Naive thymus-derived CD4-positive, alpha-beta T cell (primary cell): ENCODE measurements at regions of chr16 and their contacts with region 1.

Region 1: DNA sequence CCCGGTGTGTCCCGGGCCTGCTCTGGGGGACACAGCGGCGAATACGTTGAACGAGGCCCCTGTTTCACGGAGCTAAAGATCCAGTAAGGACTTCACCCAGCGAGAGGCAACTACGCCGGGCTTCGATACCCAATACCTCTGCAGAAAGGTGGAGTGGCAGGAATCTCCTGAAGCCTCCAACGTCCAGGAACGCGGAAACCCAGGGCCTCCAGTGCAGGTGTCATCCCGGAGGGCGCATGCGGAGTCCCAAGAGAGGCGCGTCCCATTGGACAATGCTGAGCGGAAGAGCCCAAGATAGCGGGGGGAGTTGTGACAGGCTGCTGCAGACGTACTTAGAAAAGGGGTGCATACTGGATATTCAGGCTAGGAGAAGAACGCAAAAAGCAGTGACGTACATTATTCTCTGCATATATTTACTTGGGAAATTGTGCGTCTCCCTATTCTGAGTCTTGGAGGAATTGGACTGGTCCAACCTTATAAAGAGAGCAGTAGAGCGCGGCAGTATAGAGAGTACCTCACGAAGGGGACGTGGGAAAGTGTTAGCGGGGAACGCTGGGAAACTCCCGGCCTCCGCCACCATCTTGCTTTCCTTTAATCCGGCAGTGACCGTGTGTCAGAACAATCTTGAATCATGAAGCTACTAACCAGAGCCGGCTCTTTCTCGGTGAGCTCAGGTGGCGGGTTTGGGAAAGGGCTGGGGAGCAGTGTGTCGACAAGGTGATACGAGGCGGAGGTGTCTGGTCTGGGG is at the start of gene UQCRC2:
- DNase-seq: peak; percentile 76 to 92 (median 89)
- ATAC-seq: peak; percentile 94
- H3K4me3 ChIP-seq: peak within 1 kb of the TSS; percentile 81
- H3K4me3 Mint-ChIP-seq: peak within 1 kb of the TSS; percentile 94 to 100 (median 99)
- H3K27ac ChIP-seq: peak within 1 kb of the TSS; percentile 97
- H3K27ac Mint-ChIP-seq: peak within 1 kb of the TSS; percentile 96 to 99 (median 98)
- H3K4me1 ChIP-seq: peaks cover 30 to 33% of the 10 kb centered on the region in 2 donors
- H3K4me1 Mint-ChIP-seq: peaks cover 34 to 86% (median 68%) of the 10 kb centered on the region in 7 donors
- H3K27me3 ChIP-seq: no peaks in the 10 kb centered on the region
- H3K27me3 Mint-ChIP-seq: no peaks in the 10 kb centered on the region
- total RNA-seq, gene UQCRC2: 158 to 227 (median 180) TPM

Region 2: DNA sequence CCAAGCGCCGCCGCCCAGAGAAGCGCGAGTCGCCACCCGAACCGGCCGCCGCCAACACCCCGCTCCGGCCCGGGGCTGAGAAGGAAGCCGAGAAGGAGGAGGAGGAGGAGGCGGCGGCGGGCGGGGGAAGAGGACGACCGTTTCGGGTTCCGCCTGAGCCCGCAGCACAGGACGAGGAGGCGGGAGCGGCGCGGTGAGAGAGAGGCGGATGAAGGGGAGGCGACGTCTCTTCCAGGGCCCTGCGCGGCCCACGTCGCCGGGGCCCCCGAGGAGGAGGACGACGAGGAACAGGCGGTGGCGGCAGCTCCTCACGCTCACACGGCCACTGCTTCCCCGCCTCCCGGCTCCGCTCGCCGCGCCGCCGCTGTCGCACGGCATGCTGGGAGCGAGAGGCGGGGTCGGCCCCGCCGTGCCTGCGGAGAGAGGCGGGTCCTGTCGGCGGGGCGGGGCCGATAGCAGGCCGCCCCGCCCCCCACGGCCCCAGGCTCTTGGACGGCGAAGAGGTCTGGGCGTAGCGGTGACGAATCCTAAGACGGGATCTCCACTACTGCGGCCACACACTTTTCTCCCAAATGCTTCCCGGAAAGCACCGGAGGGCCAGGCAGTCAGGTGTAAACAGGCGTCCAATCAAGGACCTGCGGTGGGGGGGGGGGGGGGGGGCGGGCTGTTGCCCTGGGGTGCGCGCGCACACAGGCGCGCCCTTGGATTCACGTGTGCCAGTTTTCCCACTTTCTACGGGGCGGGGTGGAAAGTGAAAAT is 450.9 kb before region 1 on chr16:
- CTCF ChIA-PET with region 1: no interaction called
- POLR2A ChIA-PET with region 1: no interaction called
- intact Hi-C with region 1: loop called in 1 of 2 experiments (anchors 10 kb)
- DNase-seq: peak; percentile 85 to 99 (median 96)
- ATAC-seq: peak; percentile 90
- H3K4me3 ChIP-seq: peak overlapping the region; percentile 91
- H3K4me3 Mint-ChIP-seq: peak overlapping the region; percentile 76 to 94 (median 86)
- H3K27ac ChIP-seq: peak overlapping the region; percentile 92
- H3K27ac Mint-ChIP-seq: peak overlapping the region; percentile 71 to 93 (median 89)
- H3K4me1 ChIP-seq: peaks cover 4 to 7% of the 10 kb centered on the region in 2 donors
- H3K4me1 Mint-ChIP-seq: peaks cover 11 to 26% (median 16%) of the 10 kb centered on the region in 7 donors
- H3K27me3 ChIP-seq: no peaks in the 10 kb centered on the region
- H3K27me3 Mint-ChIP-seq: no peaks in the 10 kb centered on the region

Region 3: DNA sequence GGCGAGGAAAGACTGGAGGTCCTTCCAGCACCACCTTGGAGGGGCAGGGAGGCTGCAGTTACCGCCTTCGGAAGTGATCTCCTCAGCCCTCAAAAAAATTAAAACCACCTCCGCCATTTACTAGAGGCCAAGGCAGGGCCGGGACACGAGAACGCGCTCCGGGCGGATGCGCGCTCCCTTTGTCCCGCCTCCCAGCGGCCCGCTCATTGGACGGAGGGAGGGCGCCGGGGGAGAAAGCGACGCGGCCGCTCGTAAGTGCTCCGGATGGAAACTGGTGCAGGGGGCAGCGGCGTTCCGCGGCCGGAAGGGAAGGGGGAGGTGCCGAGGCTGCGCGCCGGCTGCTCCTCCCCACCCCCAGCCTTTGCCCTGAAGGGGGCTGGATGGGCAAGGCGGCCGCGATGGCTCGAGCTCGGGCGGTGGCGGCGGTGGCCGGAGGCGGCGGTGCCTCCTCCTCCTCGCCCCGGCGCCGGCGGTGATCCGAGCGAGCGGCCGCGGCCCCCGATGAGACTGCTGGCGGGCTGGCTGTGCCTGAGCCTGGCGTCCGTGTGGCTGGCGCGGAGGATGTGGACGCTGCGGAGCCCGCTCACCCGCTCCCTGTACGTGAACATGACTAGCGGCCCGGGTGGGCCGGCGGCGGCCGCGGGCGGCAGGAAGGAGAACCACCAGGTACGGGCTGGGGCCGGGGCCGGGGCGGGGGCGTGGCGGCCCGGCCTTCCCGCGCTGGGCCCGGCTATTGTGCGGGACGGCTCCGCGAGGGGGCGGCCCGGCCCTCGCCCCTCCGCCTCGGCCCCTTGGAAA is 353.5 kb before region 1 on chr16 and contains the start of gene METTL9:
- CTCF ChIA-PET with region 1: no interaction called
- POLR2A ChIA-PET with region 1: no interaction called
- intact Hi-C with region 1: loop called (anchors 1 kb)
- DNase-seq: peak; percentile 92 to 96 (median 94)
- ATAC-seq: peak; percentile 96
- H3K4me3 ChIP-seq: peak within 1 kb of the TSS; percentile 82
- H3K4me3 Mint-ChIP-seq: peak within 1 kb of the TSS; percentile 91 to 98 (median 94)
- H3K27ac ChIP-seq: peak within 1 kb of the TSS; percentile 91
- H3K27ac Mint-ChIP-seq: peak within 1 kb of the TSS; percentile 86 to 99 (median 96)
- H3K4me1 ChIP-seq: peaks cover 21 to 32% of the 10 kb centered on the region in 2 donors
- H3K4me1 Mint-ChIP-seq: peaks cover 45 to 70% (median 54%) of the 10 kb centered on the region in 7 donors
- H3K27me3 ChIP-seq: no peaks in the 10 kb centered on the region
- H3K27me3 Mint-ChIP-seq: no peaks in the 10 kb centered on the region
- total RNA-seq, gene METTL9: 68.4 to 128 (median 80.1) TPM

Region 4: DNA sequence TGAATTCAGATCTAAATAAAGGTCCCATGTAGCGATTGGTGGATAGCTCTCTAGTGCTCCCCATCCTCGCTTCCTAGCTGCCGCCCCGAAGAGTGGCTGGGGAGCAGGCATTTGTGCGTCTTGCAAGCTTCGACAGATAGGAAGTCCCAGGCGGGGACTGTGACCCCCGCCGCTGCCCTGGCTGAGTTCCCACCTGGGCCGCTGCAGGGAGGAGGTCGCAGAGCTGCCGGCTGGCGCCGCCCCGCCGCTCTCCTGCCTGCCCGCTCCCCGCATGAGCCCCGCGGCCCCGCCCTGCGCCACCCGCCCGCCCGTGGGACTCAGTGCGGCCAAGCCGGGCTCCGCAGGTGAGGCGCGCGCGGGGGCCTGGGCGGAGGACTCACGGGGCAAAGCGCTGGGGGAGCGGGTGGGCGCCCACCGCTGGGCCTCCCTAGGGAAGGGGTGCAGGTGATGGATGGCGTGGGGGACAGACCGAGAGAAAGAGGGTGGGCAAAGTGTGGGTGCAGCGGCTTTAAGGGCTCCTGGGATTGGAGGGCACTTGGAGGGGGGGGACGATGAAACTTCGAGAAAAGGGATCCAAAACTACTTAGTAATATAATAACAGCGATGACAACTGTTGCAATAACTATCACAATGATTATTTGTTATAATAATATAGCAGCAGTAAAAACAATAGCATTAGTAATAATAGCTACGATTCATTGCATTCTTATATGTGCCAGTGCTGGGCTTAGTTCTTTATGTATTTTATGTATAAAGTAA is 288.9 kb before region 1 on chr16 and contains the start of gene OTOA:
- CTCF ChIA-PET with region 1: no interaction called
- POLR2A ChIA-PET with region 1: no interaction called
- intact Hi-C with region 1: loop called in 1 of 2 experiments (anchors 10 kb)
- DNase-seq: peak in 7 of 9 donors; percentile 10 to 35 (median 21)
- ATAC-seq: peak; percentile 84
- H3K4me3 ChIP-seq: no peak within 1 kb of the TSS
- H3K4me3 Mint-ChIP-seq: peak within 1 kb of the TSS; percentile 21 to 86 (median 82)
- H3K27ac ChIP-seq: no peak within 1 kb of the TSS
- H3K27ac Mint-ChIP-seq: peak within 1 kb of the TSS in 3 of 9 donors; percentile 22 to 75 (median 37)
- H3K4me1 ChIP-seq: peaks cover 10 to 11% of the 10 kb centered on the region in 2 donors
- H3K4me1 Mint-ChIP-seq: peaks cover 7 to 29% (median 21%) of the 10 kb centered on the region in 7 donors
- H3K27me3 ChIP-seq: no peaks in the 10 kb centered on the region
- H3K27me3 Mint-ChIP-seq: peaks cover 0 to 34% (median 0%) of the 10 kb centered on the region in 5 donors
- total RNA-seq, gene OTOA: 0.07 to 0.17 (median 0.13) TPM in 4 of 5 experiments, not detected in the other

Region 5: GRCh38 chr16:22007509-22008214 is 54.7 kb after region 1 on chr16 and contains the start of gene MOSMO:
- CTCF ChIA-PET with region 1: no interaction called
- POLR2A ChIA-PET with region 1: interaction called, 3 read pairs
- intact Hi-C with region 1: loop called (anchors 2 kb)
- DNase-seq: peak; percentile 38 to 78 (median 59)
- ATAC-seq: peak; percentile 94
- H3K4me3 ChIP-seq: peak within 1 kb of the TSS; percentile 79
- H3K4me3 Mint-ChIP-seq: peak within 1 kb of the TSS; percentile 85 to 92 (median 89)
- H3K27ac ChIP-seq: peak within 1 kb of the TSS; percentile 93
- H3K27ac Mint-ChIP-seq: peak within 1 kb of the TSS; percentile 64 to 91 (median 89)
- H3K4me1 ChIP-seq: peaks cover 8 to 20% of the 10 kb centered on the region in 2 donors
- H3K4me1 Mint-ChIP-seq: peaks cover 19 to 58% (median 51%) of the 10 kb centered on the region in 7 donors
- H3K27me3 ChIP-seq: no peaks in the 10 kb centered on the region
- H3K27me3 Mint-ChIP-seq: peaks cover 0 to 12% (median 0%) of the 10 kb centered on the region in 5 donors
- total RNA-seq, gene MOSMO: 8.5 to 24.0 (median 13.5) TPM

Region 6: DNA sequence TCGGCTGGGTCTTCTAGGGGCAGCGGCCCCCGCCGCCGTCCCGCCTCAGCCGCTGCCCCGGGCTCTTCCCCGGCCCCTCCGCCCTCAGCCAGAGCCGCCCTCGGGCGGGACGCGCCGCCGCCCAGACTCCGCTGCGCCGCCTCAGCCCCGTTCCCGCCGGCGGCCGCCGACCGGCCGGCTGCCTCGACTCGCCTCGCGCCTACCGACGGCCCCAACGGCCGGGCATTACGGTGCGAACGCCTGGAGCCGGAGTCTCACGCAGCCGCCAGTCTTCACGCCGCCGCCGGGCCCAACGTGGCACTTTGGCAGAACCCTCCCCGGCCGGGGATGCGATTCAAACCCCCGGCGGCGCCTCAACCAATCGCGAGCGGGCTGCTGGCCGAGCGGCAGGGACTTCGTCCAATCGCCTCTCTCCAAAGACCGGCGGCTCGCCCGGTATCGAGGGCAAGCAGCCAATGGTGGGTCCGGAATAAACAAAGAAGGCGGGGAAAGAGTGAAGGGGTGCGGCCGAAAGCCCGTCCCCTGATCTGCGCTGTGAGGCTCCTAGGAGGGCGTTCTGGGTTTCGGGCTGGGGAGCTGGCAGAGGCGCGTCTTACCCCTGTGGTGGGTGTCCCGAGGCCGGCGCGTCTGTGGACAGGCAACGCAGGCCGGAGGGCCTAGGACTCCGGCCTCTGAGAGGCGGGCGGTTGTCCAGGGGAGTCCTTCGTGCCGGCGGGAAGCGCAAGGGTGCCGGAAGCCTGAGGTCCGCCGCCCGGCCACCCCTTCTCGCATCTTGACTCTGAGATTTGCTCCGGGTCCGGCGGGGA is 421.5 kb after region 1 on chr16 and contains the start of gene CDR2:
- CTCF ChIA-PET with region 1: no interaction called
- POLR2A ChIA-PET with region 1: no interaction called
- intact Hi-C with region 1: loop called in 1 of 2 experiments (anchors 1 kb)
- DNase-seq: peak; percentile 94 to 99 (median 98)
- ATAC-seq: peak; percentile 97
- H3K4me3 ChIP-seq: peak within 1 kb of the TSS; percentile 77
- H3K4me3 Mint-ChIP-seq: peak within 1 kb of the TSS; percentile 93 to 99 (median 98)
- H3K27ac ChIP-seq: peak within 1 kb of the TSS; percentile 86
- H3K27ac Mint-ChIP-seq: peak within 1 kb of the TSS; percentile 91 to 98 (median 93)
- H3K4me1 ChIP-seq: peaks cover 31 to 34% of the 10 kb centered on the region in 2 donors
- H3K4me1 Mint-ChIP-seq: peaks cover 17 to 56% (median 48%) of the 10 kb centered on the region in 7 donors
- H3K27me3 ChIP-seq: no peaks in the 10 kb centered on the region
- H3K27me3 Mint-ChIP-seq: peaks cover 0 to 5% (median 0%) of the 10 kb centered on the region in 5 donors
- total RNA-seq, gene CDR2: 28.7 to 91.9 (median 65.6) TPM